ENCODE measurements at regions of chr20 and their contacts with region 1.

Region 1: GRCh38 chr20:3218307-3218988 is 9.2 kb downstream of the ITPA start:
- DNase-seq: no peak
- H3K4me3 ChIP-seq: no peak overlapping the region
- CTCF ChIP-seq: peak; percentile 95

Region 2: GRCh38 chr20:3204124-3204822 is 14.2 kb before region 1 on chr20 and contains the start of gene DDRGK1:
- CTCF ChIA-PET with region 1: interaction called, 74 read pairs
- POLR2A ChIA-PET with region 1: interaction called, 3 read pairs
- DNase-seq: no peak
- H3K4me3 ChIP-seq: peak within 1 kb of the TSS; percentile 93
- CTCF ChIP-seq: no peak

Region 3: DNA sequence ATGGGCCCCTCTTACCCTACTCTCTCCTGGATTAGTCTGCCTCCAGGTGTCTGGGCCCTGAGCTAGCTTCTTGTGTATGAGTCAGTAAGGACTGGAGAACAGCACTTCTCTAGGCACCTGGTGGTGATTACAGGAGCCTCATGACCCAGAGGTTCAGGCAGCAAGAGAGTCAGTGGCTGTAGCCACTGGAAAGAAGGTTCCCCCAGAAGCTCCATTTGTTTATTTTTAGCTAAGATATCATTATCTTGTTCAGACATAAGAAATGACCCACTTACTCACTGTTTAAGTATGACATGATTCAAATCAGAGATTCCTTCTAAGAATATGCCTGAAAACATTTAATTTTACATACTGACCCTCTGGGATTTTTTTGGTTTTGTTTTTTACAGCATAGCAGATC is 44.1 kb after region 1 on chr20:
- CTCF ChIA-PET with region 1: interaction called, 10 read pairs
- POLR2A ChIA-PET with region 1: no interaction called
- DNase-seq: no peak
- H3K4me3 ChIP-seq: no peak overlapping the region
- CTCF ChIP-seq: no peak

Region 4: DNA sequence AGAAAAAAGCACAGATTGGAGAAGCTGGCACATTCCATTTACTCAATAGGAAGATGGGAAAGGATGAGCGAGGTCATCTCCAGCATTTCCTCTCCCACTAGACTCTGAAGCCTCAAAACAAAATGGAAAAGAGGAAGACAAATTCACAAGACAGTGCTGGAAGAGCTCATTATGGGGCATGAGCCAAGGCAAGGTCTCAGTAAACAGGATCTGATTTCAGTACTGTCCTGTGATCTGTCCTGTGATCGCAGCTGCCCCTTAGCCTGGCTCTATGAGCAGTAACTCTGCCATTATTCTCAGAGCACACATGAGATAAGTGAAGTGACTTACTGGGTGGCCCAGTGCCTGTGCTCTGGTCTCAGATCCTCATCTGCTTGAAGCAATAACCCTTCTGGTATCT is 88.6 kb after region 1 on chr20:
- CTCF ChIA-PET with region 1: interaction called, 16 read pairs
- POLR2A ChIA-PET with region 1: no interaction called
- DNase-seq: no peak
- H3K4me3 ChIP-seq: no peak overlapping the region
- CTCF ChIP-seq: no peak

Region 5: GRCh38 chr20:3330046-3330741 is 111.7 kb after region 1 on chr20:
- CTCF ChIA-PET with region 1: interaction called, 15 read pairs
- POLR2A ChIA-PET with region 1: no interaction called
- DNase-seq: no peak
- H3K4me3 ChIP-seq: no peak overlapping the region
- CTCF ChIP-seq: no peak

Region 6: DNA sequence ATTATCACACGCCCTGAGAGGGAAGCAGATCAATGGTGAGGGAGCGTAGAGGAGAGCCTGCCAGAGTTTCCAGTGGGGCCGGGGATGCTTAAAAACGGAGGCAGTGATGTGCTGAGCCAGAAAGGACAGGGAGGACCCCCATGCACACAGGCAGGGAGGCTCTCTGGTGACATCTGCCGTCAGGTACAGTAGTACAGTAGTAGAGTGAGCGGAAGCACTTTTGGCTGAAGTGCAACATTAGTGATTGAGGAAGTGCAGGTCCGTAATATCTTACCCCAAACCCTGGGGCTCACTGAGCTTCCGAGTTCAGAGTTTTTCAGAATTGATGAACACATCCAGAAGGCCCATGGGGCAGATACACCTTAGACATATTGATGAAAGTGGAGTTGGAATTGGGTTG is 402.7 kb after region 1 on chr20:
- CTCF ChIA-PET with region 1: no interaction called
- POLR2A ChIA-PET with region 1: no interaction called
- DNase-seq: no peak
- H3K4me3 ChIP-seq: no peak overlapping the region
- CTCF ChIP-seq: no peak